Activated CD4-positive, alpha-beta T cell treated with anti-CD3 and anti-CD28 coated beads, Interleukin-2, amount 10 ng/mL, durations not matched to agents 7 days and 5 days (primary cell): ENCODE measurements at regions of chr3 and their contacts with region 1.

Region 1: GRCh38 chr3:15205934-15206661 is at the start of gene CAPN7:
- DNase-seq: peak; percentile 90
- H3K4me3 Mint-ChIP-seq: peak within 1 kb of the TSS; percentile 83
- H3K27ac Mint-ChIP-seq: peak within 1 kb of the TSS; percentile 93
- H3K4me1 Mint-ChIP-seq: peaks cover 34% of the 10 kb centered on the region
- H3K27me3 Mint-ChIP-seq: peaks cover 1% of the 10 kb centered on the region
- total RNA-seq, gene CAPN7: 25.0 to 27.0 TPM

Region 2: GRCh38 chr3:15108082-15108545 is 98.0 kb before region 1 on chr3:
- CTCF ChIA-PET with region 1: interaction called, 10 read pairs
- POLR2A ChIA-PET with region 1: no interaction called
- DNase-seq: peak; percentile 77
- H3K4me3 Mint-ChIP-seq: no peak overlapping the region
- H3K27ac Mint-ChIP-seq: no peak overlapping the region
- H3K4me1 Mint-ChIP-seq: peaks cover 6% of the 10 kb centered on the region
- H3K27me3 Mint-ChIP-seq: peaks cover 10% of the 10 kb centered on the region

Region 3: DNA sequence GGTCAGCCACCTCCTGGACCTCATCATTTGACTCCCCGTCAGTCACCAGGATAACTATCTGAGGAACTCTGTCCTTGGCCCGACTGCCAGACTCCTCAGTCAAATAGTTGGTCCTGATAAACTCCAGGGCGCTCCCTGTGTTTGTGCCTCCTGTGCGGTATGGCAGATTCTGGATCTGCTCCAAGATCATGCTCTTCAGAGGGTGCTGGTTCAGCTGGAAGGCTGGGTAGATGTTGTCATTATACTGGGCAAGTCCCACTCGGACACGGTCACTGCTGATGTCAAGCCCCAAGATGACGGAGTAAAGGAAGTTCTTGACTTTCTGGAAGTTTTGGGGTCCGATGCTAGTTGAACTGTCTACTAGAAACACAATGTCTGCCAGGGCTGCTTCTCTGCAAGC is 31.1 kb before region 1 on chr3:
- CTCF ChIA-PET with region 1: no interaction called
- POLR2A ChIA-PET with region 1: no interaction called
- DNase-seq: no peak
- H3K4me3 Mint-ChIP-seq: no peak overlapping the region
- H3K27ac Mint-ChIP-seq: no peak overlapping the region
- H3K4me1 Mint-ChIP-seq: peaks cover 5% of the 10 kb centered on the region
- H3K27me3 Mint-ChIP-seq: peaks cover 45% of the 10 kb centered on the region

Region 4: DNA sequence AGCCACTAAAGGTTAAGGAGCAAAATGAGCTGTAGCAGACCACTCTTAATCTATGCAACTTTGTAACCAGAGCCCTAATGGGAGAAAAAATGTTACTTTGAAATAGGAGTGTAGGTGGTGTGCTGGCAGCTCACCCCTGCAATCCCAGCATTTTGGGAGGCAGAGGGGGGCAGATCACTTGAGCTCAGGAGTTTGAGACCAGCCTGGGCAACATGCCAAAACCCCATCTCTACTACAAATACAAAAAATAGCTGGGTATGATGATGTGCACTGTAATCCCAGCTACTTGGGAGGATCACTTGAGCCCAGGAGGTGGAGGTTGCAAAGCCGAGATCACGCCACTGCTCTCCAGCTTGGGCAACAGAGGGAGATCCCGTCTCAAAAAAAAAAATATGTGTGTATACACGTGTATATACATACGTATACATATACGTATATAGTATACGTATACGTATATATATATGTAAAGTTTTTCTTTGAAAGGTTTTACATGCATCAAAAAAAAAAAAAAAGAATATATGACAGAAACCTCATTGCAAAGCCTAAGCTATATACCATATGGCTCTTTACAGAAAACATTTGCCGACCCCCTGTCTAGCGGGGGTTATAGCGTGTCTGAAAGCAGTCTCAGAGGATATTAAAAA is 15.6 kb after region 1 on chr3:
- CTCF ChIA-PET with region 1: interaction called, 14 read pairs
- POLR2A ChIA-PET with region 1: no interaction called
- DNase-seq: no peak
- H3K4me3 Mint-ChIP-seq: no peak overlapping the region
- H3K27ac Mint-ChIP-seq: no peak overlapping the region
- H3K4me1 Mint-ChIP-seq: peaks cover 5% of the 10 kb centered on the region
- H3K27me3 Mint-ChIP-seq: no peaks in the 10 kb centered on the region

Region 5: DNA sequence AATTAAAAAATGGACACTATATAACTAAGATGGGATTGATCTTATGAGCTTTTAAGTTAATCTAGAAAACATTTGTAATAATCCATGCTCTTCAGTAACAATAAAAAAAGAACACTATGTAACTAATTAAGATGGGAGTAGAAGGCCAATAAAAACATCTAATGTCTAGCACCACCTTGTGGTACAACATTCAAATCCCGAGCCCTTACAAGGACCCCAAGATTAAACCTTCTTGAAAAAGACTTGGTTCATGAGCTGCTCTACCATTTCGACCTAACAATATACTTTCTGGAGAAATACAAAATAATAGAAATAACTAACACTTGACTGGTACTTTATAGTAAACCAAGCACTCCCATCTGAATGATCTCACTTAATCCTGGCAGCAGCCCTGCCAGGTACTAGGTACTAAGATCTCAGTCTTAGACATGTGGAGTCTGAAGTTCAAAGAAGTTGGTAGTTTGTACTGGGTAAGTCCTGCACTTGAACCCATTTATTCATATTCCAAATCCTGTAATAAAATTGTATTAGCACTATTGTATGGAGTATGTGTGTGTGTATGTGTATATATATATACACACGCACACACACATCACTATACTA is 199.5 kb after region 1 on chr3:
- CTCF ChIA-PET with region 1: interaction called, 10 read pairs
- POLR2A ChIA-PET with region 1: no interaction called
- DNase-seq: peak; percentile 42
- H3K4me3 Mint-ChIP-seq: no peak overlapping the region
- H3K27ac Mint-ChIP-seq: no peak overlapping the region
- H3K4me1 Mint-ChIP-seq: peaks cover 12% of the 10 kb centered on the region
- H3K27me3 Mint-ChIP-seq: no peaks in the 10 kb centered on the region

Region 6: DNA sequence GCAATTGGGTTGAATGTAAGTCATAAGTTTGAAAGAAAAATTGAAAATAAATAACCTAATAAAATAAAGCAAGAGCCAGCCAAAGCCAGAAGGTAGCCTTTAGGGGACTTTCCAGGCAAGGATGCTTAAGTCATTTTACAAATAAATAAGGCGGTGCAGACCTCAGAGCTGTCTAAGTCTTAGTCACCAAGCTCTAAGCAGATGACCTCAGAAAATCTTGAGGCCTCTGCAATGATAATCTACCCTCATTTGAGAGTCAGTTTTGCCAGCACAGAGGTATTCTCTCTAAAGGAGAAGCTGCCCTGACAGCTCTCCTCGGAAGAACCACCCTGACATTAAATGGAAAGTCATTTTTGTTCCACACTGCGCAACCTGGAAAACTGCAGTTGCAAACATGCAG is 1172.8 kb after region 1 on chr3:
- CTCF ChIA-PET with region 1: no interaction called
- POLR2A ChIA-PET with region 1: no interaction called
- DNase-seq: no peak
- H3K4me3 Mint-ChIP-seq: no peak overlapping the region
- H3K27ac Mint-ChIP-seq: no peak overlapping the region
- H3K4me1 Mint-ChIP-seq: peaks cover 72% of the 10 kb centered on the region
- H3K27me3 Mint-ChIP-seq: no peaks in the 10 kb centered on the region